Activated B cell treated with CpG ODN at 0.5 μM for 24 hours (primary cell): ENCODE measurements at regions of chr1 and their contacts with region 1.

Region 1: GRCh38 chr1:159015440-159015909 is 5.8 kb downstream of the IFI16 start:
- DNase-seq: peak; percentile 36
- ATAC-seq: peak; percentile 98
- H3K4me3 Mint-ChIP-seq: peak overlapping the region; percentile 83
- H3K27ac Mint-ChIP-seq: peak overlapping the region; percentile 92
- H3K4me1 Mint-ChIP-seq: peaks cover 70% of the 10 kb centered on the region
- H3K27me3 Mint-ChIP-seq: no peaks in the 10 kb centered on the region
- CTCF ChIP-seq: no peak

Region 2: DNA sequence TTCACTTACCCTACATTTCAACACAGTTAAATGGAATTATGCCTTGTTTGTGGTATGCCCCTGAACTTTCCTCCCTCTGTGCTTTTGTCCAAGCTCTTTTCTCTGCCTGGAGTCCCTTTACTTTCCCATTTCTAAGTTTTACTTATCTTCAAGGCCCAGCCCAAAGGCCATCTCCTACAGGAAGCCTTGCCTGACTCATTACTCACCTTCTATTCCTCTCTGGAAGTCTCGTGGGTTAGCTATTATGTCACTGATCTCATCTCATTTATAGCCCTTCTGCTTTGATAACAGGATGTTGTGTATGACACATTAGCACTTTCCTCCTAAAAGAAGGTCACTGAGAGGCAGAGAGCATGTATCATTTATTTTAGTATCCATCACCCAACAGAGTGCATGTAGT is 913.5 kb before region 1 on chr1:
- CTCF ChIA-PET with region 1: no interaction called
- POLR2A ChIA-PET with region 1: no interaction called
- intact Hi-C with region 1: no loop called
- DNase-seq: no peak
- ATAC-seq: no peak
- H3K4me3 Mint-ChIP-seq: no peak overlapping the region
- H3K27ac Mint-ChIP-seq: no peak overlapping the region
- H3K4me1 Mint-ChIP-seq: no peaks in the 10 kb centered on the region
- H3K27me3 Mint-ChIP-seq: no peaks in the 10 kb centered on the region
- CTCF ChIP-seq: no peak

Region 3: DNA sequence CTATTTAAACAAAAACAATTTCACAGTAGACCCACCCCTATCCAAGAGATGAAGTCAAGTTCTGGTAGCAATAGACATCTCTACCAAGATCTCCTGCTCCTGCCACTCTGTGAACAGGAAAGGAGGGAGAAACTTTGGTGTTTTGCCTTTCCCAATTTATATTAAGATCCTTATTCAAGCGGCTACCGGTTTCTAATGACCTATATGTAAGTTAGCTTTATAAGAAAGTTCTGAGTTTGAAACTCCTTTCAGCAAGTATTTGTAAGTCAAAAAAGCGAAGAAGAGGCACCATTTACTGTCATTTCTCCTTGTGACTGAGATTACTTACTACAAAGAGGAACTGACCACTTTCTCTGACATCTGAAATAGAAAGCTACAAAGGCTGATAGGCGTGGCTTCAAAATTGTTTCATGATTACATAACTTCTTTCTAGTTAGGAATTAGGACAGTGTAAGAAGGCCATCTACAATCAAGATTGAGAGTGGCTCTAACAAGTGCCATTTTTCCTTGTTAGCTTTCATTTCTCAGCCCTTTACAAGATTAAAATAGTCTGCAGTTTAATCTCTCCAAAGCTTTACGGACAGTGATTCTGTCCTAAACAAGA is 184.5 kb before region 1 on chr1 and contains the start of gene MNDA:
- CTCF ChIA-PET with region 1: no interaction called
- POLR2A ChIA-PET with region 1: no interaction called
- intact Hi-C with region 1: loop called (anchors 2 kb)
- DNase-seq: no peak
- ATAC-seq: peak; percentile 92
- H3K4me3 Mint-ChIP-seq: peak within 1 kb of the TSS; percentile 82
- H3K27ac Mint-ChIP-seq: peak within 1 kb of the TSS; percentile 93
- H3K4me1 Mint-ChIP-seq: peaks cover 30% of the 10 kb centered on the region
- H3K27me3 Mint-ChIP-seq: no peaks in the 10 kb centered on the region
- CTCF ChIP-seq: no peak
- total RNA-seq, gene MNDA: 14.2 and 17.3 TPM in 2 replicates

Region 4: DNA sequence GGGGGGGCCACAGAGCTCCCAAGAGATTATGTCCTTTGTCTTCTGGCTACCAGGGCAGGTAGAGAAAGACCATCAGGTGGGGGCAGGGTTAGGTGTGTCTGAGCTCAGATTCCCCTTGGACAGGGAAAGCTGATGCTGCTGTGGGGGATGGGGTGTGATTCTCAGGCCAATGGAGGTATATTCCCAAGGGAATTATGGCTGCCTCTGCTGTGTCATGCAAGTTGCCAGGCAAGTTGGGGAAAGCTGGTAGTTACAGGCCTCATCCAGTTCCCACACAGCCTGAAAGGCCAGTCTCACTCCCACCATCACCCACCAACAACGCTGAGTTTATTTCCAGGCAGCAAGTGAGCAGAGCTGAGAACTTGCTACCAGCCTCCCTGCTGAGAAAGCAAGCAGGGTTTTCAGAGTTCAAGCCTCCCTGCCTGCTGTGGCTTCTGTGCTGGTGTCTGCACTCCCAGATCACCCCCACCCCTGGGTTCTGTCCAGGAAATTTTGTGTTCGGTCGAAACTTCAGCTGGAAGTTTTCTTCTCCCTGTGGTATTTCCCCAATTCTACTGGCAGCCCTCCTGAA is 15.5 kb after region 1 on chr1:
- CTCF ChIA-PET with region 1: no interaction called
- POLR2A ChIA-PET with region 1: interaction called, 4 read pairs
- intact Hi-C with region 1: loop called (anchors 2 kb)
- DNase-seq: no peak
- ATAC-seq: no peak
- H3K4me3 Mint-ChIP-seq: no peak overlapping the region
- H3K27ac Mint-ChIP-seq: peak overlapping the region; percentile 35
- H3K4me1 Mint-ChIP-seq: peaks cover 65% of the 10 kb centered on the region
- H3K27me3 Mint-ChIP-seq: no peaks in the 10 kb centered on the region
- CTCF ChIP-seq: no peak

Region 5: DNA sequence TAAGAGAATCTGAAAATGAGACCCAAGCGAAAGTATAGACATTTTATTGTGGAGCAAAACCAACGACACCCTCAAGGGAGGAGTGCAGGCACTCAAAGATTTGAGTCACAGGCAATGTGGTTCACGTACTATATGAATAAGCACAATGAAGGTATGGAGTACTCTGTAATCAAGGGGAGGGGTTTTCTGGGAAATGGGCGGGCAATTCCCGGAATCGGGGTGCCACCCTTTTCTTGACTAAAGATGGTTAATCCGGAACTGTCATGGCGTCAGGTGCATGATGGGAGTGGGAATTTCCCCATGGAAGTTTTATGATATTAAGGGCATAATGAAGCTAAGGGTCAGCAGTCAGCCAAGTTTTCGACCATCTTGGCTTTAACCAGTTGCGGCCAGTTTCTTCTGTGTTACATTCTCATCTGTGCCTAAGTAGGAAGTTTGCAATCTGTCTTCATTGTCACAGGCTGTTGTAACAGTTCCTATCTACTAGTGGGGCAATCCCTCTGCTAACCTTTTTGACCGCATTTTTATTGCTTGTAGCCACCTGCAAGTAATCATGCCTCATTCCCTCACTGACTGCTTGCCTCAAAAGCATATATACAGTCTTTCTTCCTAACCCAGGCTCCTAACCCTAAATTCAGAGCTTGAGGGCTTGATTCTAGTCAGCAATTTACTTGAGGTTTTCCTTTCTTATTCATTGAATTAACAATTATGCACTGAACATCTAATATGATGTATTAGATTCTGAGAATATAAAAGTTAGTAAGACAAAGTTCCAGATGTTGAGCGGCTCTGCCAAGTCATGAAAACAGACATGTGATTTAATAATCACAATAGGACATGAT is 61.9 kb after region 1 on chr1:
- CTCF ChIA-PET with region 1: interaction called, 3 read pairs
- POLR2A ChIA-PET with region 1: interaction called, 63 read pairs
- intact Hi-C with region 1: loop called (anchors 2 kb)
- DNase-seq: peak; percentile 71
- ATAC-seq: peak; percentile 73
- H3K4me3 Mint-ChIP-seq: peak overlapping the region; percentile 89
- H3K27ac Mint-ChIP-seq: peak overlapping the region; percentile 94
- H3K4me1 Mint-ChIP-seq: peaks cover 40% of the 10 kb centered on the region
- H3K27me3 Mint-ChIP-seq: no peaks in the 10 kb centered on the region
- CTCF ChIP-seq: no peak